Common myeloid progenitor, CD34-positive (primary cell): ENCODE measurements at regions of chr9 and their contacts with region 1.

Region 1: GRCh38 chr9:129752915-129753729 is at the start of gene PTGES:
- DNase-seq: peak; percentile 31 to 71 (median 71)
- H3K4me3 ChIP-seq: peak within 1 kb of the TSS in 3 of 7 experiments; percentile 11 to 31 (median 24)
- H3K27ac ChIP-seq: no peak within 1 kb of the TSS
- H3K4me1 ChIP-seq: peaks cover 0 to 20% (median 13%) of the 10 kb centered on the region in 4 experiments
- H3K27me3 ChIP-seq: peaks cover 0 to 25% (median 17%) of the 10 kb centered on the region in 5 experiments

Region 2: GRCh38 chr9:129524582-129525270 is 228.4 kb before region 1 on chr9:
- CTCF ChIA-PET with region 1: no interaction called
- POLR2A ChIA-PET with region 1: no interaction called
- DNase-seq: no peak
- H3K4me3 ChIP-seq: no peak overlapping the region
- H3K27ac ChIP-seq: no peak overlapping the region
- H3K4me1 ChIP-seq: no peaks in the 10 kb centered on the region
- H3K27me3 ChIP-seq: no peaks in the 10 kb centered on the region

Region 3: GRCh38 chr9:129776938-129777768 is 24.0 kb after region 1 on chr9:
- CTCF ChIA-PET with region 1: interaction called, 14 read pairs
- POLR2A ChIA-PET with region 1: no interaction called
- DNase-seq: peak; percentile 96 to 99 (median 98)
- H3K4me3 ChIP-seq: peak overlapping the region in 4 of 7 experiments; percentile 30 to 53 (median 33)
- H3K27ac ChIP-seq: peak overlapping the region in 1 of 2 experiments; percentile 50
- H3K4me1 ChIP-seq: peaks cover 7 to 23% (median 20%) of the 10 kb centered on the region in 4 experiments
- H3K27me3 ChIP-seq: peaks cover 0 to 8% (median 0%) of the 10 kb centered on the region in 5 experiments

Region 4: DNA sequence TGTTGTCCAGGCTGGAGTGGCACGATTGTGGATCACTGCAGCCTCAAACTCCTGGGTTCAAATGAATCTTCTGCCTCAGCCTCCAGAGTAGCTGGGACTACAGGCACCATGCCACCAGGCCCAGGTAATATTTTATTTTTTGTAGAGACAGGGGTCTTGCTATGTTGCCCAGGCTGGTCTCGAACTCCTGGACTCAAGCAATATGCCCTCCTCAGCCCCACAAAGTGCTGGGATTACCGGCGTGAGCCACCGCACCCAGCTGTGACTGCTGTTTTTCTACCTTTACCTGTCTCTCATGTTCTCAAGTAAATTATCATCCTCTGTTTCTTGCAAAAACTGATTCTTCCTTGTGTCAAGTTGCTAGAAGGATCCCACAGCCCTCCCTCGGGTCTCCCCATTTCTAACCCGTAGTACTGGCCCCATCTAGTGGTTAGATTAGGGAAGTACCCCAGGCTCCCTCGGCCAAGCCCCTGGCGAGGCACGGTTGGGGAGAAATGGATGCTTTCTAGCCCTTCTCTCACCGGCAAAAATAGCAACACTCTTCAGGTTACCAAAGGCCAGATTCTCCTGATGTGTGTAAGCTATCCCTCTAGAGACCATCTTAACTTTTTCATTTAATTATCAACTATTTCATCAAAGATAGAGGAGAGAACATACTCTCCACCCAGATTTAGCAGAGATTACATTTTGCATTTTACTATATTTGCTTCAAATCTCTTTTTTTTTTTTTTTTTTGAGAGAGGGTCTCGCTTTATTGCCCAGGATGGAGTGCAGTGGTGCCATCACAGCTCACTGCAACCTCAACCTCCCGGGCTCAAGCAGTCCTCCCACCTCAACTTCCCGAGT is 30.6 kb after region 1 on chr9:
- CTCF ChIA-PET with region 1: interaction called, 14 read pairs
- POLR2A ChIA-PET with region 1: no interaction called
- DNase-seq: peak; percentile 75 to 89 (median 81)
- H3K4me3 ChIP-seq: no peak overlapping the region
- H3K27ac ChIP-seq: no peak overlapping the region
- H3K4me1 ChIP-seq: no peaks in the 10 kb centered on the region
- H3K27me3 ChIP-seq: peaks cover 0 to 13% (median 0%) of the 10 kb centered on the region in 5 experiments